ENCODE measurements at regions of chr2 and their contacts with region 1.

Region 1: GRCh38 chr2:71068218-71069035 is at the start of gene NAGK:
- DNase-seq: peak; percentile 99
- H3K4me3 ChIP-seq: peak within 1 kb of the TSS; percentile 92 to 98
- H3K27ac ChIP-seq: peak within 1 kb of the TSS; percentile 92 to 97
- H3K4me1 ChIP-seq: peaks cover 5 to 18% of the 10 kb centered on the region in 2 experiments; a peak in 3 of 4 replicates
- H3K27me3 ChIP-seq: no peaks in the 10 kb centered on the region; the same call in 1 of the 2 replicates
- CTCF ChIP-seq: no peak
- EP300 ChIP-seq: no peak
- RAD21 ChIP-seq: no peak
- polyA plus RNA-seq, gene NAGK: 74.8 and 83.6 TPM in 2 replicates

Region 2: GRCh38 chr2:71000780-71001591 is 67.4 kb before region 1 on chr2:
- CTCF ChIA-PET with region 1: interaction called, 15 read pairs
- POLR2A ChIA-PET with region 1: interaction called, 8 read pairs
- DNase-seq: peak; percentile 82
- H3K4me3 ChIP-seq: peak overlapping the region; percentile 26 to 34; a peak in 3 of 4 replicates
- H3K27ac ChIP-seq: no peak overlapping the region
- H3K4me1 ChIP-seq: peaks cover 0 to 3% of the 10 kb centered on the region in 2 experiments; a peak in 1 of 4 replicates
- H3K27me3 ChIP-seq: no peaks in the 10 kb centered on the region; the same call in 1 of the 2 replicates
- CTCF ChIP-seq: peak; percentile 96
- EP300 ChIP-seq: no peak
- RAD21 ChIP-seq: peak; percentile 53

Measured in SK-N-SH (cell line).